ENCODE measurements at regions of chr1 and their contacts with region 1.

Region 1: GRCh38 chr1:98001764-98002163 is 80.9 kb upstream of the DPYD start:
- DNase-seq: no peak
- H3K4me3 ChIP-seq: no peak overlapping the region
- H3K27ac ChIP-seq: no peak overlapping the region
- H3K4me1 ChIP-seq: peaks cover 24% of the 10 kb centered on the region
- H3K27me3 ChIP-seq: no peaks in the 10 kb centered on the region
- CTCF ChIP-seq: no peak
- POLR2A ChIP-seq: no peak

Region 2: DNA sequence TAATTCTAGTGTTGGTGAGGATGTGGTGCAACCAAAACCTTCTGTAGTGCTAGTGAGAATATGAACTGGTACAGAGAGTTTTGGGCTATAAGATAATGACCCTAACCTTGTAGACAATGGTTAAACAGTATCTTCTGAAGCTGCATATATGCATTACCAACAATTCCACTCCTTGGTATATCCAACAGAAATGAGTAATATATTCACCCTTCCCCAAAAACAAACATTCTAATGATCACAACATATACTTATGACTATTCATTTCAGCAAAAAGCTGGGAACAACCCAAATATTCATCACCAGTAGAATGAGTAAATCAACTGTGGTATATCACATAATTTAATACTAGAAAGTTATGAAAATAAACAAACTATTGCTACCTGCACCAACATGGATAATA is 41.3 kb before region 1 on chr1:
- CTCF ChIA-PET with region 1: no interaction called
- POLR2A ChIA-PET with region 1: no interaction called
- dilution Hi-C with region 1: no loop called
- intact Hi-C with region 1: no loop called
- DNase-seq: no peak
- H3K4me3 ChIP-seq: no peak overlapping the region
- H3K27ac ChIP-seq: no peak overlapping the region
- H3K4me1 ChIP-seq: no peaks in the 10 kb centered on the region
- H3K27me3 ChIP-seq: no peaks in the 10 kb centered on the region
- CTCF ChIP-seq: no peak
- POLR2A ChIP-seq: no peak

Region 3: DNA sequence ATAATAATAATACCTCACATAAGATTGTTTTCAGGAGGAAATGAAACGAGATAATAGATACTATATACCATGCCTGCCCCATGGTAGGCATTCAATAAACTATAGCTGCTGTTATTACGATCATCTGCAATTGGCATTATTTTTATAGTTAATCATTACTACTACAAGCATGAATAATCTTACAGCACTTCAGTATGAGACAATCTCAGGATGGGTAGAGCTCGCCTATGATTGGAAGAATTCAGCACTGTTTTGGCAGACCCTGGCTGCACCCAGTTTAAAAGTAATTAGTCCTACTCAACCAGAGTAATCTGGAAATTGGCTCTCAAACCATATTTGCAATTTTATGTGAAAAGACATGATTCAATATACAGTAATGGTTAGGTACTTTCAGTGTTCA is 24.1 kb after region 1 on chr1:
- CTCF ChIA-PET with region 1: interaction called, 5 read pairs
- POLR2A ChIA-PET with region 1: no interaction called
- dilution Hi-C with region 1: no loop called
- intact Hi-C with region 1: loop called (anchors 2 kb)
- DNase-seq: no peak
- H3K4me3 ChIP-seq: no peak overlapping the region
- H3K27ac ChIP-seq: no peak overlapping the region
- H3K4me1 ChIP-seq: peaks cover 16% of the 10 kb centered on the region
- H3K27me3 ChIP-seq: no peaks in the 10 kb centered on the region
- CTCF ChIP-seq: no peak
- POLR2A ChIP-seq: no peak